SK-N-SH (cell line): ENCODE measurements at regions of chr6 and their contacts with region 1.

Region 1: DNA sequence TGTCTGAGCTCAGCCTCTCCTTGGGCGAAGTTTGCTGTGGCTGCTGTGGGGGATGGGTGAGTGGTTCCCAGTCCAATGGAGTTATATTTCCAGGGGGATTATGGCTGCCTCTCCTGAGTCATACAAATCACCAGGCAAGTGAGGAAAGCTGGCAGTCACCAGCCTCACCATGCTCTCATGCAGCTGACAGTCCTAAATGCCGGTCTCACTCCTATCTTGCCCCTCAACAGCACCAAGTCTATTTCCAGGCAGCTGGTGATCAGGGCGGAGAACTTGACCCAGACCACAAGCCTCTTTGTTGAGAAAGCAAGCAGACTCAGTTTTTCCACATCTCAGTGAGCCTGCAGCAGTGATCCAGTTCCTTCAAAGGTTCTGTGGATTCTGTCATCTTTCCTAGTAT is 98.9 kb downstream of the TBC1D32 start:
- DNase-seq: no peak
- H3K4me3 ChIP-seq: no peak overlapping the region
- H3K27ac ChIP-seq: no peak overlapping the region
- H3K4me1 ChIP-seq: no peaks in the 10 kb centered on the region
- H3K27me3 ChIP-seq: no peaks in the 10 kb centered on the region
- CTCF ChIP-seq: no peak
- EP300 ChIP-seq: no peak
- RAD21 ChIP-seq: no peak

Region 2: GRCh38 chr6:121222656-121223055 is 12.7 kb before region 1 on chr6:
- CTCF ChIA-PET with region 1: interaction called, 18 read pairs
- POLR2A ChIA-PET with region 1: no interaction called
- DNase-seq: no peak
- H3K4me3 ChIP-seq: no peak overlapping the region
- H3K27ac ChIP-seq: no peak overlapping the region
- H3K4me1 ChIP-seq: no peaks in the 10 kb centered on the region
- H3K27me3 ChIP-seq: no peaks in the 10 kb centered on the region
- CTCF ChIP-seq: peak; percentile 56
- EP300 ChIP-seq: no peak
- RAD21 ChIP-seq: peak; percentile 35; the same call in 1 of the 2 replicates